Colonic mucosa (tissue), 4 donors: ENCODE measurements at regions of chr6 and their contacts with region 1.

Region 1: GRCh38 chr6:111478749-111479148 is 4.3 kb downstream of the REV3L start:
- DNase-seq: no peak
- H3K4me3 ChIP-seq: no peak overlapping the region
- H3K27ac ChIP-seq: no peak overlapping the region
- H3K4me1 ChIP-seq: peaks cover 5% of the 10 kb centered on the region
- H3K27me3 ChIP-seq: no peaks in the 10 kb centered on the region
- CTCF ChIP-seq: peak; percentile 21

Region 2: GRCh38 chr6:111259089-111259831 is 219.5 kb before region 1 on chr6:
- intact Hi-C with region 1: loop called (anchors 10 kb)
- DNase-seq: peak; percentile 99
- H3K4me3 ChIP-seq: peak overlapping the region; percentile 72
- H3K27ac ChIP-seq: peak overlapping the region; percentile 79
- H3K4me1 ChIP-seq: peaks cover 8% of the 10 kb centered on the region
- H3K27me3 ChIP-seq: no peaks in the 10 kb centered on the region
- CTCF ChIP-seq: peak; percentile 97

Region 3: DNA sequence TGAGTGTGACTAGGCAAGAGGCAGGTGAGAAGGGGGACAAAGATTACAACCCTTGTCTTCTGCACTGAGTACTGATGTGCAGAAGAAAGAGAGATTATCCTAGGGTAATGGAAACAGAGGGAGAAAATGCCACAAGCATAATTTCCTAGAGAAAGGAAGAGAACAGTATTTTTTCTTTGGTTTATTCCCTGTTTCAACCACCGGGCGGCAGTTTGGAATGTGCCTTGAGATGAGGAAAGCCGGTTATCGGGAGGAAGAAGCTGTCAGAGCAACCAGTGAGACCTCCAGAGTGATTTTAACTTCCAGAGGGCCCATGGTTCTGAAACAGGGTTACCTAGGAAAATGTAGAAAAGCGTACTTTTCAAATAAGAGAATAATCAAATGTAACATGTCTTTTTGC is 117.1 kb before region 1 on chr6:
- intact Hi-C with region 1: loop called (anchors 5 kb)
- DNase-seq: peak; percentile 39
- H3K4me3 ChIP-seq: no peak overlapping the region
- H3K27ac ChIP-seq: no peak overlapping the region
- H3K4me1 ChIP-seq: no peaks in the 10 kb centered on the region
- H3K27me3 ChIP-seq: no peaks in the 10 kb centered on the region
- CTCF ChIP-seq: peak; percentile 33

Region 4: DNA sequence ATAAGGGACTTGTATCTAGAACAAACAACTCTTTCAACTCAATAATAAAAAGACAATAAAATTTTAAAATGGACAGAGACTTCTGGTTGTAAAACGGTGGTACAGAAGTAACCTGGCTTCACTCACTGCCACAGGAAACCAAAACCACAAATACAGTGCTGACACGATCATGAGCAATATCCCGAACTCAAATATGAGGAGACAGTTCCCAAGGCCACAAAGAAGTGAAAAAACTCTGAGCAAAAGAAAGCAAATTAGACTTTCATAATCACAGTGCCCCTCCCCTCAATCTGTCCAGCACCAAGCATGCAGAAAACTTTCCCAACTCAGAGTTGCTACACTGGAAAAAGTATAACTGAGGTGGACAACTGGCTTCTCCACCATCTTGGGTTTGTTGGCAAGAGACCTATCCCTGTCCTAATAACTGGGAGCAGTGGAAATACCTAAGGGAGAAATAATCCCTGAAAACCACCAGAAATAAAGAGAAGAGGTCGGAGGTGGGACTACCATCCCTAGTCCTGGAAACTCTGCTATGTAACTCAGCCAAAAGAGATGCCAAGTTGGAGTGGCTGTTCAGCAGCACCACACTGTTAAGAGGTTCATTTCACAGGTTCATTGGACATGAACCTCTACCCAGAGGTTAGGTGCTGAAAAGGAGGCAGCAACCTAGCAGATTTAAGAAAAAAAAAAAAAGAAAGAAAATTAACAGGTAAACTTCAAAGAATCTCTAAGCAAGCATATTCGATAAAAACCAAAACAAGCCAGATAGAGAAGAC is 51.2 kb before region 1 on chr6:
- intact Hi-C with region 1: loop called (anchors 10 kb)
- DNase-seq: no peak
- H3K4me3 ChIP-seq: no peak overlapping the region
- H3K27ac ChIP-seq: peak overlapping the region; percentile 34
- H3K4me1 ChIP-seq: peaks cover 6% of the 10 kb centered on the region
- H3K27me3 ChIP-seq: no peaks in the 10 kb centered on the region
- CTCF ChIP-seq: no peak